Activated B cell treated with CpG ODN at 0.5 μM for 24 hours (primary cell): ENCODE measurements at regions of chr5 and their contacts with region 1.

Region 1: GRCh38 chr5:95961617-95962474 is at the start of gene ELL2:
- DNase-seq: peak; percentile 92
- ATAC-seq: peak; percentile 84
- H3K4me3 Mint-ChIP-seq: peak within 1 kb of the TSS; percentile 99
- H3K27ac Mint-ChIP-seq: peak within 1 kb of the TSS; percentile 97
- H3K4me1 Mint-ChIP-seq: peaks cover 48% of the 10 kb centered on the region
- H3K27me3 Mint-ChIP-seq: no peaks in the 10 kb centered on the region
- CTCF ChIP-seq: no peak
- total RNA-seq, gene ELL2: 52.9 and 56.0 TPM in 2 replicates

Region 2: GRCh38 chr5:95631991-95632675 is 329.7 kb before region 1 on chr5:
- CTCF ChIA-PET with region 1: no interaction called
- POLR2A ChIA-PET with region 1: no interaction called
- intact Hi-C with region 1: loop called (anchors 1 kb)
- DNase-seq: no peak
- ATAC-seq: peak; percentile 97
- H3K4me3 Mint-ChIP-seq: peak overlapping the region; percentile 24
- H3K27ac Mint-ChIP-seq: peak overlapping the region; percentile 92
- H3K4me1 Mint-ChIP-seq: peaks cover 10% of the 10 kb centered on the region
- H3K27me3 Mint-ChIP-seq: peaks cover 1% of the 10 kb centered on the region
- CTCF ChIP-seq: no peak

Region 3: DNA sequence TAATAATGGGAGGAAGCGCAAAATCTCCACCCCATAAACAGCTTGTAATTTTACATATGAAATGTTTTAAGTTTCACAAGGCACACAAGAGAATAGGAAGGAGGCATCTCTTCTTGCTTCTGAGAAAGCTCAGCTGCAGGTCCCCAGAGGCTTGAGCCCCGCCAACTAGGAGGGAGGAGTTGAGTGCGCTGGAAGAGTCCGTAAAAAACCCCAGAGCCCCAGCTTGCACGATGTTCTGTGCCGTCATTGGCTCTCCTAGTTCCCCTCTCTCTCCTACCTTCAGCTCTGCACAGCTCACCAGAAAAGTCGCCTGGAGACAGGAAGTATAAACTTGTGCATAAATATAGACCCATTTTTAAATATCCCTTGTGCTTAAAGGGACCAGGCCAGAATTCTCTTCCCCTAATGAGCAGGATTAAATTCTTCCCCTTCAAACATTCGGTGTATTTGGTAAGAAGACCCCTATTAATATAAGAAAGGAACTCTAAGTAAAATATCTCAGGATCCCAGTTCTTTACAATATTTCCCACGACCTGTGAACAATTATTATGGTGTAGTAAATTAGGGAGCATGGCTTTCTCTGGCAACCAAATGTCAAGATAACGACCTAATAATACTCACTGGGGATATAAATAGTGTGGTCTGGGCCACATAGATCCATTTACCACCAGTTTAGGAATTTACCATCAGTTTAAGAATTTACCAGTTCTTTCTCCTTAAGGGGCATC is 153.0 kb before region 1 on chr5:
- CTCF ChIA-PET with region 1: no interaction called
- POLR2A ChIA-PET with region 1: interaction called, 3 read pairs
- intact Hi-C with region 1: loop called (anchors 5 kb)
- DNase-seq: peak; percentile 72
- ATAC-seq: peak; percentile 99
- H3K4me3 Mint-ChIP-seq: peak overlapping the region; percentile 77
- H3K27ac Mint-ChIP-seq: peak overlapping the region; percentile 95
- H3K4me1 Mint-ChIP-seq: peaks cover 56% of the 10 kb centered on the region
- H3K27me3 Mint-ChIP-seq: no peaks in the 10 kb centered on the region
- CTCF ChIP-seq: no peak

Region 4: GRCh38 chr5:95858661-95859326 is 103.1 kb before region 1 on chr5:
- CTCF ChIA-PET with region 1: no interaction called
- POLR2A ChIA-PET with region 1: interaction called, 3 read pairs
- intact Hi-C with region 1: loop called (anchors 1 kb)
- DNase-seq: peak; percentile 83
- ATAC-seq: peak; percentile 97
- H3K4me3 Mint-ChIP-seq: peak overlapping the region; percentile 66
- H3K27ac Mint-ChIP-seq: no peak overlapping the region
- H3K4me1 Mint-ChIP-seq: peaks cover 32% of the 10 kb centered on the region
- H3K27me3 Mint-ChIP-seq: peaks cover 14% of the 10 kb centered on the region
- CTCF ChIP-seq: peak; percentile 80

Region 5: GRCh38 chr5:95927927-95928723 is 33.7 kb before region 1 on chr5:
- CTCF ChIA-PET with region 1: interaction called, 3 read pairs
- POLR2A ChIA-PET with region 1: interaction called, 26 read pairs
- intact Hi-C with region 1: loop called (anchors 1 kb)
- DNase-seq: no peak
- ATAC-seq: peak; percentile 70
- H3K4me3 Mint-ChIP-seq: peak overlapping the region; percentile 37
- H3K27ac Mint-ChIP-seq: peak overlapping the region; percentile 84
- H3K4me1 Mint-ChIP-seq: peaks cover 67% of the 10 kb centered on the region
- H3K27me3 Mint-ChIP-seq: no peaks in the 10 kb centered on the region
- CTCF ChIP-seq: no peak

Region 6: DNA sequence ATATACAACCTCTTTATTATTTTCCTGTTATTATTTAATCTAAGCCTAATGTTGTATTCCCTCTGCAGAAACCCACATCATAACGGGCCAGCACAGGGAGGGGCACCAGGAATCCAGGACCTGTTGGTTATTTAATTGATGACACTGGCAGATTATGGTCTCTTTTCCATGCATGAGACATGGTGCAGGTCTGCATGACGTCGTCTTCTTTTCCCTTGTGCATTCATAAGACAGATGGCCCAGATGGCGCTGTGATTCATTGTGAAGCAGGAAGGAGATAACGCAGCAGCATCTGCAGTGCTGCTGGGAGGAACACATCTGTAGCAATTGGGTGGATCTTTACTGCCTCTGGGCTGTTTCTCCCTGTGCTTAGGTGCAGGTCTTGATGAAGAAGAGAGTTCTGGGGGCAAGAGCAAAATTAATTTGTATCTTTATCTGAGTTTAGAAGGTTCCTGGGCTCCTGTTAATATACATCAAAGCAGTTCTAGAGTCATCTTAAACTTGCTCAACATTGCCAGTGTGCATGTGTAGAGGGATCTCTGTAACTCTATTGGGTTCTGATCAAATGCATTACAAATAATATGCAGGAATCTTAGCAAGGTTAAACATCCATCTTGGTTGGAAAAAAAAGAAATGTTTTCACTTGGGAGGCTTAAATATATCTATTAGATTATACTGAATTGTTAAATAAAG is 295.1 kb after region 1 on chr5:
- CTCF ChIA-PET with region 1: no interaction called
- POLR2A ChIA-PET with region 1: no interaction called
- intact Hi-C with region 1: no loop called
- DNase-seq: no peak
- ATAC-seq: peak; percentile 28
- H3K4me3 Mint-ChIP-seq: no peak overlapping the region
- H3K27ac Mint-ChIP-seq: no peak overlapping the region
- H3K4me1 Mint-ChIP-seq: peaks cover 14% of the 10 kb centered on the region
- H3K27me3 Mint-ChIP-seq: no peaks in the 10 kb centered on the region
- CTCF ChIP-seq: no peak

Region 7: DNA sequence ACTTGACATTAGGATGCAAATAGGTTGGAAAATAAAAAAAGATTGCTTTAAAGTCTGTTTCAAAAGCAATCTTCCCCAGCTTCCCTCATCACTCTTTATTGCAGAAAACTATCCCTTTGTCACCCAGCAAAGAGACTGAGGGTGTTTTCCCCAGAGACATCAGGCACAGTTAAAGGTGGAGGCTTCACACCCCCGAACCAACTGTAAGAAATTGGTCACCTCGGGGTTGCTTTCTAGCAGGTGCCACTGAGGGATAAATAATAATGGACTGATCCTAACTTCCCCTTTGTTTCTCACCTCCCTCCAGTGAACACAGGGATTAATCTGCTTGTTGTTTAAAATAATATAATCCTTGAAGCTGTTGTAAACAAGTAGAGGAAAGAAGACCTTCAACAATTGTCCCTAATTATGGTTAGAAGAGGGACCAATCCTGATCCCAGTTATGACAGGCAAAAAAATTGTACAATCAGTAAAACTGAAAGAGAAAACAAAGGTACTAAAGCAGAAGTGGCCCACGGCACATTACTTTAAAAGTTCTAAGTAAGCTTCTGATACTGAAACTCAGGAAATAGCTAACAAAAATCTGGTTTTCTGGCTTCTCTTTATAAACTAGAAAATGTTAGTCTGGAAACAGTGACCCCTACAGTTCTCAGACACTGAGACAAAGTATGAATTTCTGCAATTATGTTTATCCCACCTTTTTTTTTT is 477.8 kb after region 1 on chr5:
- CTCF ChIA-PET with region 1: no interaction called
- POLR2A ChIA-PET with region 1: no interaction called
- intact Hi-C with region 1: loop called (anchors 1 kb)
- DNase-seq: no peak
- ATAC-seq: peak; percentile 71
- H3K4me3 Mint-ChIP-seq: peak overlapping the region; percentile 56
- H3K27ac Mint-ChIP-seq: peak overlapping the region; percentile 77
- H3K4me1 Mint-ChIP-seq: peaks cover 17% of the 10 kb centered on the region
- H3K27me3 Mint-ChIP-seq: peaks cover 11% of the 10 kb centered on the region
- CTCF ChIP-seq: no peak

Region 8: DNA sequence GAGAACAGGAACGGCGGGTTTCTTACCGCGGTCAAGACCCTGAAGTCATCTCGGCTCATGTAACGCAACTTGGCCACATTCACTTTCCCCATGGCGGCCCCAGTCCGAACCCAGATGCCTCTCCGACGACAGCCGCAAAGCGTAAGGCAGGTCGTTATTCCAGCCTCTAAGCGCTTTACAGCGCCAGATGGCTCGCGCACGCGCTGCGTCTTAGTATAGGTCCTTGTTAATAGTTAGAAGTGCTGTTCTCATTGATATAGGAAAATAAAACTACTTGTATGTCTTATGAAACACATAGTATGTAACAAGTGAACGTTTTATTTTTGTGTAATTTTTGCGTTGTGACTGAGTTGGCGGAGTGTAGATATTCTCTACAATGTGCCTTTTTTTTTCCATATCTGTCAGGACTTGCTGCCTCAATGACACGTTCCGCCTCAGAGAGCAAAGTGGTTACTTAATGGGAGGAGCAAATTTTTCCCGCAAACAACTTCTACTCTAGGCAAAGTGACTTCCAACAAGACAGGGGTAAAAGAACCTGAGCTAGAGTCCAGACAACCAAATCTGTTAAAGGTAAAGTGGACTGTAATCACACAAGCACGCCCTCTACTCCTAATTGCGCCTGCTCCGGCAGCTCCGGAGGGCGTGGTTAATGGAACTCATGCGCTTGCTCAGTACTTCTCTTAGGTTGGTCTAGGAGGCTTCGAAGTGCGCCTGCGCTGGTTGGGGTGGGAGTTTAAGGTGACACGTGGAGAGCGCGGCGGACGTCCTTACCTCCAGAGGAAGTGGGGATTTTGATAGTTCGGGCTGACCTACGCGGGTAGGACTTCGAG is 1221.5 kb after region 1 on chr5 and contains the start of gene RIOK2:
- CTCF ChIA-PET with region 1: no interaction called
- POLR2A ChIA-PET with region 1: no interaction called
- intact Hi-C with region 1: loop called (anchors 1 kb)
- DNase-seq: peak; percentile 78
- ATAC-seq: peak; percentile 89
- H3K4me3 Mint-ChIP-seq: peak within 1 kb of the TSS; percentile 96
- H3K27ac Mint-ChIP-seq: peak within 1 kb of the TSS; percentile 99
- H3K4me1 Mint-ChIP-seq: peaks cover 34% of the 10 kb centered on the region
- H3K27me3 Mint-ChIP-seq: no peaks in the 10 kb centered on the region
- CTCF ChIP-seq: no peak
- total RNA-seq, gene RIOK2: 38.3 and 41.4 TPM in 2 replicates